Pancreas (tissue), 10 donors: ENCODE measurements at regions of chr4 and their contacts with region 1.

Region 1: GRCh38 chr4:78864405-78865024 is 74.7 kb downstream of the PAQR3 start:
- DNase-seq: peak in 2 of 6 donors; percentile 8 to 17
- ATAC-seq: peak; percentile 67 to 91 (median 84)
- H3K4me3 ChIP-seq: no peak overlapping the region
- H3K27ac ChIP-seq: no peak overlapping the region
- H3K4me1 ChIP-seq: peaks cover 0 to 6% (median 0%) of the 10 kb centered on the region in 3 donors
- H3K27me3 ChIP-seq: no peaks in the 10 kb centered on the region
- CTCF ChIP-seq: peak; percentile 48 to 67 (median 64)

Region 2: DNA sequence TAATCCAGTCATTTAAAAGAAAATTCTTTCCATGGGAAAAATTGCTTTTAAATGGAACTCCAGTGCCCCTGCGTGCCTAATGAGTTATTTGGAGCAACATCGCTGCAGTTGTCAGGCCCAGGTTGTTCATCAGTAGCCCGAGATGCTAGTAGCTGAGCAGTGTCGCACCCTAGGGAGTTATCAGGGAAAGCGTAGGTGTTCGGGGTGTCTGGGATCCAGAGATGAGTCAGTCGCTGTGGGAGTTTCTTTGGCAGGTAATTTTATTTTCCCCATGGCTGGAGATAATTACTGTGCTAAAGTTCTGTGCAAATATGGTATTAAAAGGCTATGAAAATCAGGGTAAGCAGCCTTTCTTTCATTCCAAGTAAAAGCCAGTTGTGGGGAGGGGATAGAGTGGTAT is 263.5 kb before region 1 on chr4:
- intact Hi-C with region 1: loop called in 1 of 3 experiments (anchors 10 kb)
- DNase-seq: no peak
- ATAC-seq: peak in 2 of 4 donors; percentile 57 to 70
- H3K4me3 ChIP-seq: no peak overlapping the region
- H3K27ac ChIP-seq: no peak overlapping the region
- H3K4me1 ChIP-seq: peaks cover 0 to 4% (median 0%) of the 10 kb centered on the region in 3 donors
- H3K27me3 ChIP-seq: no peaks in the 10 kb centered on the region
- CTCF ChIP-seq: no peak

Region 3: GRCh38 chr4:78612398-78613178 is 251.9 kb before region 1 on chr4:
- intact Hi-C with region 1: loop called in 2 of 3 experiments (anchors 5 to 10 kb)
- DNase-seq: peak in 1 of 6 donors; percentile 25
- ATAC-seq: peak; percentile 64 to 90 (median 86)
- H3K4me3 ChIP-seq: no peak overlapping the region
- H3K27ac ChIP-seq: no peak overlapping the region
- H3K4me1 ChIP-seq: peaks cover 0 to 3% (median 0%) of the 10 kb centered on the region in 3 donors
- H3K27me3 ChIP-seq: no peaks in the 10 kb centered on the region
- CTCF ChIP-seq: peak; percentile 15 to 55 (median 44)

Region 4: DNA sequence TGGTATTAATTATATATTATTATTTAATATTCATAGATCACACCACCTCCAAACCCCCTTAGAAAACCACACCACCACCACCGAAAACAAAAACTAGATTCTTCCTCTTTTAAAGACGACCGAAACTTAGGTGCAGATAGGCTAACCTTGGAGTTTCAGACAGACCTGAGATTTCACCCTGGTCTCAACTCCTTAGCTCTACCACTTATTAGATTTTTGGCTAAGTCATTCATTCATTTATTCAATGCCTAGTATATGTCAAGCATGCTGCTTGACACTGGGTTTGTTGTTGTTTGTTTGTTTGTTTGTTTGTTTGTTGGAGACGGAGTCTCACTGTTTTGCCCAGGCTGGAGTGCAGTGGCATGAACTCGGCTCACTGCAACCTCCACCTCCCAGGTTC is 97.9 kb before region 1 on chr4:
- intact Hi-C with region 1: no loop called
- DNase-seq: no peak
- ATAC-seq: no peak
- H3K4me3 ChIP-seq: no peak overlapping the region
- H3K27ac ChIP-seq: no peak overlapping the region
- H3K4me1 ChIP-seq: no peaks in the 10 kb centered on the region
- H3K27me3 ChIP-seq: no peaks in the 10 kb centered on the region
- CTCF ChIP-seq: no peak